Right ventricle myocardium inferior (tissue), 1 donor: ENCODE measurements at regions of chr3 and their contacts with region 1.

Region 1: DNA sequence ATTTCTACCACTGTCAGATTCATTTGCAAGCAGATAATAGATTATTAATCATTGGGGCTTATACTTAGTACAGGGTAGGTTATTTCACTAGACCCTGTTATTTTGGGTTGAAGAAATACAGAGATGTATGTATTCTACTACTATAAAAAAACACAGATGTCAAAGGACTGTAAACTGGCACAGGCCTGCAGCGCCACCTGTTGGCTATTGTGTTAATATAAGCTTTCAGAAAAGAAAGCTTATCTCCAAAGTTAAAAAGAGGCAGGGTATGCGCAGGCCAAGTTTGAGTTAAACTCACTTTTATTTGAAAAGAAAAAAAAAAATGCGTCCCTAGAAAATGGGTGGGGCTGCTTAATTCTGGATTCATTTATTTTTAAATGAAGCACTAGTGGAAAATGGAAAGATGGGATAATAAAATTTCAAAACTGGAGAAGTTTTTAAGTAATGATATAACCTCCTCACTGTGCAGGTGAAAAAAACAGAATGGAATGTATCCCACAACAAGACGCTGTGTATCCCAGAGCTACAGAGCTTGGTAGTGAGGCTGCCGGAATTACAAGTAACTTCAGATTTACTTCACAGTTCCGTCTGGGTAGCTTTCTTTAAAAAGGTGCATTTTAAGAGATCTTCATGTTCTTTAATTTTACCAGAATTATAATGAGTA is 407.2 kb upstream of the TGFBR2 start:
- DNase-seq: peak; percentile 91
- ATAC-seq: peak; percentile 58

Region 2: GRCh38 chr3:30042274-30042859 is 156.9 kb before region 1 on chr3:
- intact Hi-C with region 1: loop called (anchors 2 kb)
- DNase-seq: no peak
- ATAC-seq: no peak

Region 3: GRCh38 chr3:30135190-30135589 is 64.0 kb before region 1 on chr3:
- intact Hi-C with region 1: loop called (anchors 1 kb)
- DNase-seq: no peak
- ATAC-seq: peak; percentile 76

Region 4: DNA sequence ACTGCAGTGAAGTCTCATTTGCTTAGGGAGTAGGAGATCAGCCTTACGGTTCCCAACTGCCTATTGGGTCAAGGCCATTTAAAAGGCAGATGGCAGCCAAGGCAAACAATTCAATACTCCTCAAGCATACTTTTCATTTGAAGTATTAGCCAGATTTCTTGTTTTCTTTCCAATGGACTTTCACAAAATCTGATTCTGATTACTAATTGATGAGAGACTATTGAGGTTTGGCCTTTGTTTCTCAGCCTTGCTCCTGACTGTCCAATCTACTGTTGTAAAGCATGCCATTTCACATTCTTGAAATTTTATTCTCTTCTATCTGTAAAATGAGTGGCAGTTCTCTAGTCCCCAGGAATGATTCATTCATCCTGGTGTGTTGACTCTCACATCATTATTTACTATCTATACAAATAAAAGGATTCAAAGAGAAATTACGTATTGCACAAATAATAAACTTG is 240.9 kb after region 1 on chr3:
- intact Hi-C with region 1: loop called (anchors 5 kb)
- DNase-seq: no peak
- ATAC-seq: no peak

Region 5: GRCh38 chr3:30693470-30694120 is 494.4 kb after region 1 on chr3:
- intact Hi-C with region 1: loop called (anchors 2 kb)
- DNase-seq: no peak
- ATAC-seq: peak; percentile 74